Body of pancreas (tissue), 4 donors: ENCODE measurements at regions of chr4 and their contacts with region 1.

Region 1: DNA sequence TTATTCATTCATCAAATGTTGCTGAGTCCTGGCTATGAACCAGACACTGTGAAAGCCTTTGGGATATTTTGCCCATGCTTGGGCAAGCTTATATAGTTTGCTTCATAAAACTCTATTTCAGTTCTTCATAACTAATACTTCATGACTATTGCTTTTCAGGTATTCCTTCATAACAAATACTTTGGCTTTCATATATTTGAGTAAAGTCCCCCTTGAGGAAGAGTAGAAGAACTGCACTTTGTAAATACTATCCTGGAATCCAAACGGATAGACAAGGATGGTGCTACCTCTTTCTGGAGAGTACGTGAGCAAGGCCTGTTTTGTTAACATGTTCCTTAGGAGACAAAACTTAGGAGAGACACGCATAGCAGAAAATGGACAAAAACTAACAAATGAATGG is 1.7 kb upstream of the AFP start:
- DNase-seq: no peak
- ATAC-seq: peak; percentile 30
- H3K4me3 ChIP-seq: no peak overlapping the region
- H3K27ac ChIP-seq: no peak overlapping the region
- H3K4me1 ChIP-seq: peaks cover 15% of the 10 kb centered on the region
- H3K27me3 ChIP-seq: no peaks in the 10 kb centered on the region
- CTCF ChIP-seq: peak in 4 of 7 experiments; percentile 22 to 40 (median 34)
- POLR2A ChIP-seq: no peak

Region 2: DNA sequence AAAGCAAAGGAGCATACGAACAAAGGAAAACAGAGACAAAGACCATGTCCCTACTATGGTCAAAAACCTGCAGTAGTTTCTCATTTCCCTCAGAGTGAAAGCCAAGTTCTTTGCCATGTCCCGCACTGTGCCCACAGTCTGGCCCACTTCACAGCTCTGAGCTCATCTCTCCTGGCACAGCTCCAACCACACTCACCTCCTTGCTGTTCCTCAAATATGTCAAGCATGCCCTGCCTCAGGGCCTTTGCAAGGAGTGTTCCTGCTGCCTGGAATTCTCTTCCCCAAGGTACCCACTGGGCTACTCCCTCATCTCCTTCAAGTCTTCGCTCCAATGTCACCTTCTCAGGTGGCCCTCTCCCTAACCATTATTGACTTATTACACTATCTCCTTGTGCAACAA is 436.9 kb before region 1 on chr4:
- intact Hi-C with region 1: no loop called
- DNase-seq: no peak
- ATAC-seq: no peak
- H3K4me3 ChIP-seq: no peak overlapping the region
- H3K27ac ChIP-seq: no peak overlapping the region
- H3K4me1 ChIP-seq: no peaks in the 10 kb centered on the region
- H3K27me3 ChIP-seq: no peaks in the 10 kb centered on the region
- CTCF ChIP-seq: no peak
- POLR2A ChIP-seq: no peak

Region 3: GRCh38 chr4:73341454-73341853 is 92.9 kb before region 1 on chr4:
- intact Hi-C with region 1: loop called (anchors 5 kb)
- DNase-seq: peak; percentile 68 to 76 (median 68)
- ATAC-seq: peak; percentile 83
- H3K4me3 ChIP-seq: no peak overlapping the region
- H3K27ac ChIP-seq: no peak overlapping the region
- H3K4me1 ChIP-seq: peaks cover 25% of the 10 kb centered on the region
- H3K27me3 ChIP-seq: no peaks in the 10 kb centered on the region
- CTCF ChIP-seq: peak; percentile 60 to 94 (median 88)
- POLR2A ChIP-seq: no peak